ENCODE measurements at regions of chr11 and their contacts with region 1.

Region 1: GRCh38 chr11:132028380-132029240 is 658.2 kb downstream of the NTM start:
- DNase-seq: peak in 1 of 2 donors; percentile 11
- ATAC-seq: peak in 2 of 8 donors; percentile 44 to 83
- H3K4me3 ChIP-seq: no peak overlapping the region
- H3K27ac ChIP-seq: no peak overlapping the region
- H3K4me1 ChIP-seq: peaks cover 0 to 11% (median 0%) of the 10 kb centered on the region in 9 donors
- H3K27me3 ChIP-seq: no peaks in the 10 kb centered on the region
- CTCF ChIP-seq: peak in 7 of 9 donors; percentile 28 to 58 (median 46)

Region 2: GRCh38 chr11:131874070-131874469 is 154.5 kb before region 1 on chr11:
- intact Hi-C with region 1: loop called in 4 of 10 experiments (anchors 5 to 10 kb)
- DNase-seq: no peak
- ATAC-seq: no peak
- H3K4me3 ChIP-seq: no peak overlapping the region
- H3K27ac ChIP-seq: no peak overlapping the region
- H3K4me1 ChIP-seq: no peaks in the 10 kb centered on the region
- H3K27me3 ChIP-seq: peaks cover 0 to 12% (median 0%) of the 10 kb centered on the region in 7 donors
- CTCF ChIP-seq: no peak

Region 3: GRCh38 chr11:131910523-131911387 is 117.9 kb before region 1 on chr11:
- intact Hi-C with region 1: loop called in 1 of 10 experiments (anchors 5 kb)
- DNase-seq: no peak
- ATAC-seq: peak in 4 of 8 donors; percentile 9 to 70 (median 24)
- H3K4me3 ChIP-seq: peak overlapping the region in 9 of 10 donors; percentile 31 to 53 (median 51)
- H3K27ac ChIP-seq: peak overlapping the region in 5 of 10 donors; percentile 1 to 75 (median 39)
- H3K4me1 ChIP-seq: peaks cover 0 to 5% (median 0%) of the 10 kb centered on the region in 9 donors
- H3K27me3 ChIP-seq: peaks cover 0 to 87% (median 64%) of the 10 kb centered on the region in 7 donors
- CTCF ChIP-seq: no peak

Region 4: GRCh38 chr11:132126973-132127899 is 98.6 kb after region 1 on chr11:
- intact Hi-C with region 1: loop called in 1 of 10 experiments (anchors 10 kb)
- DNase-seq: peak in 1 of 2 donors; percentile 73
- ATAC-seq: peak; percentile 20 to 78 (median 74)
- H3K4me3 ChIP-seq: peak overlapping the region in 7 of 10 donors; percentile 17 to 47 (median 42)
- H3K27ac ChIP-seq: peak overlapping the region in 2 of 10 donors; percentile 56 to 68
- H3K4me1 ChIP-seq: peaks cover 0 to 19% (median 14%) of the 10 kb centered on the region in 9 donors
- H3K27me3 ChIP-seq: peaks cover 0 to 30% (median 0%) of the 10 kb centered on the region in 7 donors
- CTCF ChIP-seq: peak in 8 of 9 donors; percentile 20 to 68 (median 56)

Region 5: GRCh38 chr11:132278801-132279574 is 250.4 kb after region 1 on chr11:
- intact Hi-C with region 1: no loop called
- DNase-seq: no peak
- ATAC-seq: no peak
- H3K4me3 ChIP-seq: no peak overlapping the region
- H3K27ac ChIP-seq: no peak overlapping the region
- H3K4me1 ChIP-seq: peaks cover 0 to 16% (median 0%) of the 10 kb centered on the region in 9 donors
- H3K27me3 ChIP-seq: no peaks in the 10 kb centered on the region
- CTCF ChIP-seq: peak in 7 of 9 donors; percentile 20 to 48 (median 32)